Uterus (tissue), 4 donors: ENCODE measurements at regions of chr2 and their contacts with region 1.

Region 1: GRCh38 chr2:219530048-219530963 is 13.3 kb downstream of the CHPF start:
- DNase-seq: peak; percentile 79 to 88
- H3K4me3 ChIP-seq: no peak overlapping the region
- H3K27ac ChIP-seq: peak overlapping the region in 1 of 2 donors; percentile 29
- H3K4me1 ChIP-seq: no peaks in the 10 kb centered on the region
- H3K27me3 ChIP-seq: no peaks in the 10 kb centered on the region
- CTCF ChIP-seq: peak; percentile 97 to 100 (median 100)
- POLR2A ChIP-seq: peak in 1 of 2 donors; percentile 12

Region 2: DNA sequence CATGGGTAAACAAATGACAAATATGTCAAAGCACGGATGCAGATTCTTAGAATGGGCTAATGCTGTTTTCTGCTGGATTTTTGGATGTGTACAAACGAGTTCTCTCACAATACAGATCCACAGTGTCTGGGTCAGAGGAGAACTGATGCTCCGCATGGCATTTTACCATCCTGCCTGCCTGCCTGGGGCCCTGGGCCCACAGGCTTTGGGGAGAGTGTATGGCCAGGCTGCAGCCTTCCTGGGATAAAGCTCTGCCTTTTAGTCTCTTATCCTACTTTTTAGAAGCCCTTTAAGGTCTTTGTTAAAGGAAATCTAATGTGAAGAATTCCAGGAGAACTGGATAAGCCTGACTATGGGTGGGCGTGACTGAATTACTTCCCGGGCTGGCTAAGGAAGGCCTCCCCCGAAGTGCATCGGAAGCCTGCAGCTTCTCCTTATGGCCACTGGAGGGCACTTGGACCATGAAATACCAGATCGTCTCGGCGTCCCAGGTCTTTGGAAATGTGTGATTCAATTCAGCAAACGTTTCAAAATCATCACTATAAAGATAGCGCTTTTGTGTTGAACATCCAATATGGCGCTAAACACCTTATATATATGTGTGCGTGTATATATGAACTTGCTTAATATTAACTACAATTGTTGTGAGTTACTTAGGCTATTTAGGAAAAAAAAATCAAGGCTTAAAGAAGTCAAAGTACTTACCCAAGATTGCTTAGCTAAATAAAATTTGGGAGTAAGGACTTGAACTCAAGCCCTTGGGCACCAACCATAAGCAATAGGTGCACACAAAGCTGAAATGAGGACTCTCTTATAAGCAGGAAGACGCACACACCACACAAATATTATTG is 127.4 kb before region 1 on chr2:
- intact Hi-C with region 1: loop called (anchors 5 kb)
- DNase-seq: peak; percentile 74 to 84
- H3K4me3 ChIP-seq: no peak overlapping the region
- H3K27ac ChIP-seq: peak overlapping the region; percentile 90 to 95
- H3K4me1 ChIP-seq: peaks cover 0 to 4% of the 10 kb centered on the region in 2 donors
- H3K27me3 ChIP-seq: no peaks in the 10 kb centered on the region
- CTCF ChIP-seq: peak; percentile 82 to 93 (median 88)
- POLR2A ChIP-seq: no peak

Region 3: DNA sequence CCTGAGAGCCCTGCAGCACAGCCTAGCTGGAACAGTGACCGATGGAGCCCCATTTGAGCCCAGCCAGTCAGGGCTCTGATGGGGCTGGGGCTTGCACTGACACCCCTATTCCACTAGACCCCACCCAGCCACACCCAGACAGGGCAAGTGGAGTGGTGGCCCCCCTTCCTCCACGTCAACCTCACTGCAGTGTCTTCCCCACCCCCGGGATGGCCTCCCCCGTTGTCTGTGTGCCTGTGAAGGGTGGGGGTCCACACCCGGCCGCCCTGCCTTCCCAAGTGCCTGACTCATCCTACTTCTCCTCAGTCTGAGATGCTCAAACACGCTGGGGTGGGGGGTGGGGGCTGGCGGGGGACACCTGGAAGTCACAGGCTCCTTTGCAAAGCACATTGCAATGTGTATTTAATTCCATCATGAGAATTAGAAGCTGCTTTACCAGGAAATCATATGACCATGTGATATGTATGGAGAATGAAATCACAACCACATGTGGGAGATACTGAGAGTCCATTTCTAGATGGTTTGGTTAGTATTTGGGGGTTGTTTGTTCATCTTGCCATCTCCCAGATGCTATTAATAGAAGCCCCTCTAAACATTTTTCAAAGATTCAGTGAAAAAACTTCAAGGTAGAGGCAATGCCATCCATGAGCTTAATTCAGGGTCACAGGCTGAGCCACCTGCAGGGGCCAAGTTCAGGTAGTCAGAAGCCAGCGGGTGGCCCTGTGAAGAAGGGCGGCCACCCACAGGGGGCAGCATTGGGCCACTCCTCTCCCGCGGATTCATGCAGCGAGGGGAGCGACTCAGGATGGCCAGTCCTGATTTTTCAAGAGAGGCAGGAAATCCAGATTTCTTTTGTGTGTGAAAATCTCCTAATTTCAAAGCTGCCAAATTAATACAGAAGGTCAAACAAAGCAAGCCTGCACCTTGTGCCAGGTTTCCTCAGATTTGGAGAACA is 54.3 kb before region 1 on chr2:
- intact Hi-C with region 1: loop called (anchors 5 kb)
- DNase-seq: peak; percentile 79 to 82
- H3K4me3 ChIP-seq: no peak overlapping the region
- H3K27ac ChIP-seq: peak overlapping the region; percentile 64 to 66
- H3K4me1 ChIP-seq: peaks cover 0 to 5% of the 10 kb centered on the region in 2 donors
- H3K27me3 ChIP-seq: no peaks in the 10 kb centered on the region
- CTCF ChIP-seq: peak; percentile 77 to 90 (median 84)
- POLR2A ChIP-seq: no peak

Region 4: GRCh38 chr2:219701847-219702634 is 171.7 kb after region 1 on chr2:
- intact Hi-C with region 1: no loop called
- DNase-seq: no peak
- H3K4me3 ChIP-seq: no peak overlapping the region
- H3K27ac ChIP-seq: no peak overlapping the region
- H3K4me1 ChIP-seq: no peaks in the 10 kb centered on the region
- H3K27me3 ChIP-seq: no peaks in the 10 kb centered on the region
- CTCF ChIP-seq: no peak
- POLR2A ChIP-seq: no peak

Region 5: GRCh38 chr2:220006152-220006621 is 475.9 kb after region 1 on chr2:
- intact Hi-C with region 1: no loop called
- DNase-seq: peak; percentile 30 to 33
- H3K4me3 ChIP-seq: no peak overlapping the region
- H3K27ac ChIP-seq: no peak overlapping the region
- H3K4me1 ChIP-seq: no peaks in the 10 kb centered on the region
- H3K27me3 ChIP-seq: no peaks in the 10 kb centered on the region
- CTCF ChIP-seq: no peak
- POLR2A ChIP-seq: no peak